Astrocyte of the cerebellum (primary cell): ENCODE measurements at regions of chr3 and their contacts with region 1.

Region 1: DNA sequence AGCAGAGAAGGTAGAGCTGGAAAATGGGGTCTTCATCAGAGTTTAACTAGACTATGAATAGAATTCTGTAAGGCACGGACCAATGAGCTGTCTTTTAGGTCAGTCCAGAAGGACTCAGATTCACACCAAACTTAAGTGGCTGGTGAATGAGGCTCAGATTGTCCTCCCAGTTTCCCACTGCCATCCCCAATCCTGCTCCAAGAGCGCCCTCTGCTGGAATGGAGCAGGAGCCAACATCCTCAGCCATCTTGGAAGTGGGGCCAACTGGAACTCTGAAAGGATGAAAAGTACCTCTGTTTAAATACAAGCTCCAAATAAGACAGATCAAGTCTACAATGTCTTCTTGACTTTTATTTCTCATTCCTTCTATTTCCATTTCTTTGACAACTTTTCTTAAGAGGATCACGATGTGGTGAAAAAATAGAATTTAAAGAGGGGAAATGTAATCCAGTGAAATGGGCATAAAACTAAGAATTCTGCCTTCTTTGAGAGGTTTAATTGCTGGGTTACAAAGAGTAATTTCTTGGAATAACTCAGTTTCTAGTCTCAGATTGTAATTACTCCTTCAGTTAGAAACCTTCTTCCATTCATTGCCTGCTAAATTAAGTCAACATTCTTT is 217.1 kb upstream of the TPRG1 start:
- DNase-seq: peak; percentile 88
- H3K4me3 ChIP-seq: no peak overlapping the region
- CTCF ChIP-seq: peak; percentile 91

Region 2: DNA sequence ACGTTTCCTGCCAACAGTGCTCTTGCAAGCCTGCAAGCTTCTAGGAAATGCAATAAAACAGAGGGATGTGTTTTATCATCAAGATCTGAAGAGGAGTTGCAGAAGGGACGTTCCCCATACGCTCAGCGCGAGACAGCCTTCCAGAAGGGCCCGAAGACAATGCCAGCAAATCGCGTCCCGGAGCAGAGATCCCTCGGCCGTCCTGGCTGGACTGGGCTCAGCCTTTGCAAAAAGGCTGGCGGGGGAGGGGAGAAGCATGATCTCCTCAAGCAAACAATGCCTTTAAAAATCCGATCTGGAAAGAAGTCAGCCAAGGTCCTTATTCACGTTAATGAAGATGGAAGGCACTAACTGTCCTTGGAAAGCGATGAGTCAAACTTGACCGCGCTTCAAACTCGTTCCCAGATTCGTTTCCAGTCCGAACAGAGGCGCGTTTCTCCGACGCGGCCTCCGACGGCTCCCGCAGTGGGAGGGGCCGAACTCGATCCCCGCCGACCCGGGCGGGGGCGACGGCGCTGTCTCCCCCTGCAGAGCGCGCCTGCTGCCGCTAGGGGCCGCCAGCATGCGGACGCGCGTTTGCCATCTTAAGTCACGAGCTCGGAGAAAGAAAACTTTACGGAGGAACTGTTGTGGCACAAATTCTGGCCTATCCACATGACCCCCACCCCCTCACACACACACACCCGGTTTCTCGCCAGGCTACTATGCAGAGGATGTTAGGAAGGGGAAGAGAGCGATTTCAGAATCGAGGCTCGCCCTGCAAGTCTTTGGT is 1215.0 kb before region 1 on chr3:
- in situ Hi-C with region 1: loop called (anchors 5 kb)
- DNase-seq: peak; percentile 93
- H3K4me3 ChIP-seq: peak overlapping the region; percentile 87
- CTCF ChIP-seq: peak; percentile 98

Region 3: GRCh38 chr3:188154014-188154808 is 800.5 kb before region 1 on chr3 and contains the start of gene LPP:
- in situ Hi-C with region 1: loop called (anchors 10 kb)
- DNase-seq: no peak
- H3K4me3 ChIP-seq: peak within 1 kb of the TSS; percentile 84
- CTCF ChIP-seq: peak; percentile 7

Region 4: GRCh38 chr3:188270423-188270972 is 684.2 kb before region 1 on chr3:
- in situ Hi-C with region 1: loop called (anchors 25 kb)
- DNase-seq: peak; percentile 90
- H3K4me3 ChIP-seq: no peak overlapping the region
- CTCF ChIP-seq: no peak

Region 5: DNA sequence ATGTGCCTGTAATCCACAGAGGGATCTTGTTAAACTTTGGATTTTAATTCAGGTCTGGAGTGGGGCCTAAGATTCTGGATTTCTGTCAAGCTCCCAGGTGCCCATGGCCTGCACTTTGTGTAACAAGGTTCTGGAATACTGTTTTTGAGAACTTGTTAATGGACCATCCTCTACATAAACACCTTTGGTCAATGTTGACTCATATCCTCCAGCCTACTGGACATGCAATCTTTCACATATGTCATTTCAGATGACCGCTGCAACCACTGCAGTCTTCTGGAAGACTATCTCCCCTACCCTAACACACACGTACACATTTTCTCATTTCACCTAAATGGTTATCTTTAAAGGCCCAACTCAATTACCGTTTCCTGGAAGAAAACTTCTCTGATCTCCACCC is 85.1 kb before region 1 on chr3:
- in situ Hi-C with region 1: loop called (anchors 5 kb)
- DNase-seq: no peak
- H3K4me3 ChIP-seq: no peak overlapping the region
- CTCF ChIP-seq: no peak

Region 6: GRCh38 chr3:189013224-189013888 is 58.7 kb after region 1 on chr3:
- in situ Hi-C with region 1: no loop called
- DNase-seq: no peak
- H3K4me3 ChIP-seq: no peak overlapping the region
- CTCF ChIP-seq: no peak

Region 7: GRCh38 chr3:189148081-189148507 is 193.4 kb after region 1 on chr3:
- in situ Hi-C with region 1: loop called (anchors 5 kb)
- DNase-seq: peak; percentile 51
- H3K4me3 ChIP-seq: no peak overlapping the region
- CTCF ChIP-seq: peak; percentile 71